AG04450 (cell line): ENCODE measurements at regions of chr21 and their contacts with region 1.

Region 1: GRCh38 chr21:27112186-27112585 is 145.3 kb upstream of the ADAMTS5 start:
- DNase-seq: no peak
- H3K4me3 ChIP-seq: no peak overlapping the region
- H3K27ac ChIP-seq: no peak overlapping the region
- H3K27me3 ChIP-seq: no peaks in the 10 kb centered on the region
- CTCF ChIP-seq: no peak

Region 2: DNA sequence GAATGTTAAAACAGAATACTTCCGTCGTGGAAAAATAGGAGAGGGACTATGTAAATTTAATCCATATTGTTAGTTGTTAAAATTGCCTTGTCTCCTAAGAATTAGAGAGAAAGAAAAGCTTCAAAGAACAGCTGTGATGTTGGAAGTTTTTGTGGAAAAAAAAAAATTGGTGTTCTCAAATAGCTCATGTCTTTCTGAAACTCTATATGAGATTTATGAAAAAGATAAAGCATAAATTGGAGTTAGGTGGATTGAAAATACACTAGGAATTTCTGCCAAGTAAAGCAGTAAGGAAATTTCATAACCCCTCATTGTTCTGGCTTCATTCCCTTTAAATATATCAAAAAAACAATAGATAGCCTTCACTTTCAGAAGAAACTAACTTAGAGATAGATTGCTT is 128.7 kb after region 1 on chr21:
- CTCF ChIA-PET with region 1: no interaction called
- POLR2A ChIA-PET with region 1: no interaction called
- DNase-seq: no peak
- H3K4me3 ChIP-seq: no peak overlapping the region
- H3K27ac ChIP-seq: no peak overlapping the region
- H3K27me3 ChIP-seq: no peaks in the 10 kb centered on the region
- CTCF ChIP-seq: no peak

Region 3: DNA sequence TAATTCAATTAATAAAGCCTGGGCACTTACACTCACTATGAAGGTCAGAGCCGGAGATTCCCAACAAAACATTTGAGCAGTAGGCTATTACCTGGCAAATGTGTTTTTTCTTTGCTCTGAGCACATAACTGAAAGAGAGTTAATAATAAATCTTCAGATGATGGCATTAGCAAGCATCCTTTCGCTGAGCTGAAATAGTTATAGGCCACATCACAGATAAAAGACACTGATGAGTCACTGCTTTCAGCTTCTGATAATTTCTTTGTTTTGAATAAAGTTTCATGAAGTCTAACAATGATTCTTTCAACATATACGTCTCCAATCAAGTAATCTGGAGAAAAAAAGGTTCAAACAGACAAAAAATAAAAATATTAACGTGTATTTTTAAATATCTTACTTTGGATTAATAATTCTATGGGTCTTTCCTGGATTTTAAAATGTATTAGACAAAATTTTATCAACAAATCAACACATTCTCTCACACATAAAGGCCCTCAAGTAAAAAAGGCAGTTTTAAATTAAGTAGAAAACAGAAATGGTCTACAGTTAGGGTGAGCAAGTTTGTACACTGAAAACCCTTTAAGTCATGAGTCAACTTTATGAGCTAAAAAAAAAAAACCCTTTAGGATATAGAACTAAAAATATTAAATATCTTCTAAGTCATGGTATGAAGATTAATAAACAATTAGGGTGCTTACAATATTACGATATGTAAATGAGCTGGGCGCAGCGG is 1847.3 kb after region 1 on chr21:
- CTCF ChIA-PET with region 1: no interaction called
- POLR2A ChIA-PET with region 1: interaction called, 10 read pairs
- DNase-seq: peak; percentile 44
- H3K4me3 ChIP-seq: no peak overlapping the region
- H3K27ac ChIP-seq: peak overlapping the region; percentile 22
- H3K27me3 ChIP-seq: no peaks in the 10 kb centered on the region
- CTCF ChIP-seq: no peak